Activated CD4-positive, alpha-beta T cell treated with anti-CD3 and anti-CD28 coated beads for 36 hours (primary cell): ENCODE measurements at regions of chr20 and their contacts with region 1.

Region 1: DNA sequence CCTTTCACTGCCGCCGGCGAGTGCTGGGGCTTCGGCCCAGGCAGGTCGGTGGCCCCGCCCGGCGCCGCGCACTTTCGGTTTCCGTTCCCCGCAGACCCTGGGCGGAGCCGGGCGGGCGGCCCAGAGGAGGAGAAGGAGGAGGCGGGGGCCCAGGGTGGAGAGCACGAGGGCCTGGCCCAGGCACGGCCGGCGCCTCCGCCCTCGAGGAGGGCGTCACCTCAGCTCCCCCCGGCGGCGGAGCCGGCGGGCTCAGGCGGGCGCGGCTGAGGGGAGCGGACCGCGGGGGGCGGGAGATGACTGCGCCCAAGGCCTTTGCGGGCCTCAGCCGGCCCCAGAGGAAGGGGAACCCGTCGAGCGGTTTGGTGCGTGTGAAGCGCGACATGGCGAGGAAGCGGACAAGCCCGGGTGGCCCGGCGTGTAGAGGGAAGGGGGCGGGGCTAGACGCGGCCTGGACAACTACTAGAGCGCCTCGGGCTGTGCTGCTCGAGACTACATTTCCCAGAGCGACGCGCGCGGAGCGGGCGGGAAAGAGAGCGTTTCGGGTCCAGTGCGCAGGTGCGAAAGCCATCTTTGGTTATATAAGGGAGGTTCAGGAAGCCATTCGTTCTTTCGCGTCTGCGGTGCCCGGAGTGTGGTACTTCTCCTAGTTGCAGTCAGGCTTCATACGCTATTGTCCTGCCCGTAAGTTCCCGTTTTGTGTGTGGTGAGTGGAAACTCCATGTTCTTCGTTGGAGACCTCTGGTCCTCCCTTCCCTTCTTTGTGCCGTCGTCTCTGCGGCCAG is at the start of gene ZNFX1:
- DNase-seq: peak; percentile 100
- ATAC-seq: peak; percentile 80
- H3K4me3 Mint-ChIP-seq: peak within 1 kb of the TSS; percentile 92
- H3K27ac Mint-ChIP-seq: peak within 1 kb of the TSS; percentile 98
- H3K4me1 Mint-ChIP-seq: peaks cover 52% of the 10 kb centered on the region
- H3K27me3 Mint-ChIP-seq: no peaks in the 10 kb centered on the region
- total RNA-seq, gene ZNFX1: 36.4 to 43.8 TPM

Region 2: DNA sequence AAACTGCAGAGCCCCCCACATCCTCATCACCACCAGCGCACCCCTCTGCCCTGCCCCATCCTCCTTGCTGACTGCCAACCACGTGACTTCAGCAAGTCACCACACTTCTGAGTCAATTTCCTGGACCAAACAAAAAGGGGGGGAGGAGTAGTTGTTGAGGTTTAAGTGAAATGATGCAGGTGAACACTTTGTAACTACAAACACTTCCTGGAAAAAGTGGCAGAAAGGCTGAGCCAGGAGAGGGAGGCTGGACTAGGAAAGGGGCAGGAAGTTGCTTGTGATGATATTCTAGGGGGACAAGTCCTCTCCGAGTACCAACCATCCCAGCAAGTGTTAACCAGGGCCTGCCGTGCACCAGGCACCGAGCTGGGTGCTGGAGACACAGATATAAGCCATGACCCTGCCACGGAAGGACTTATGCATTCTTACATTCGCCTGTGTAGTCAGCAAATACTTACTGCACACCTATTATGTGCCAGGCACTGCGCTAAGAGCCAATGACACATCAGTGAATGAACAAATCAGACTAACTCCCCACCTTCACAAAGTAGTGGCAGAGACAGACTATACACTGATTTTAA is 517.7 kb before region 1 on chr20:
- CTCF ChIA-PET with region 1: no interaction called
- POLR2A ChIA-PET with region 1: no interaction called
- intact Hi-C with region 1: loop called in 1 of 2 experiments (anchors 5 kb)
- DNase-seq: peak; percentile 78
- ATAC-seq: peak; percentile 87
- H3K4me3 Mint-ChIP-seq: peak overlapping the region; percentile 34
- H3K27ac Mint-ChIP-seq: peak overlapping the region; percentile 96
- H3K4me1 Mint-ChIP-seq: peaks cover 67% of the 10 kb centered on the region
- H3K27me3 Mint-ChIP-seq: no peaks in the 10 kb centered on the region

Region 3: DNA sequence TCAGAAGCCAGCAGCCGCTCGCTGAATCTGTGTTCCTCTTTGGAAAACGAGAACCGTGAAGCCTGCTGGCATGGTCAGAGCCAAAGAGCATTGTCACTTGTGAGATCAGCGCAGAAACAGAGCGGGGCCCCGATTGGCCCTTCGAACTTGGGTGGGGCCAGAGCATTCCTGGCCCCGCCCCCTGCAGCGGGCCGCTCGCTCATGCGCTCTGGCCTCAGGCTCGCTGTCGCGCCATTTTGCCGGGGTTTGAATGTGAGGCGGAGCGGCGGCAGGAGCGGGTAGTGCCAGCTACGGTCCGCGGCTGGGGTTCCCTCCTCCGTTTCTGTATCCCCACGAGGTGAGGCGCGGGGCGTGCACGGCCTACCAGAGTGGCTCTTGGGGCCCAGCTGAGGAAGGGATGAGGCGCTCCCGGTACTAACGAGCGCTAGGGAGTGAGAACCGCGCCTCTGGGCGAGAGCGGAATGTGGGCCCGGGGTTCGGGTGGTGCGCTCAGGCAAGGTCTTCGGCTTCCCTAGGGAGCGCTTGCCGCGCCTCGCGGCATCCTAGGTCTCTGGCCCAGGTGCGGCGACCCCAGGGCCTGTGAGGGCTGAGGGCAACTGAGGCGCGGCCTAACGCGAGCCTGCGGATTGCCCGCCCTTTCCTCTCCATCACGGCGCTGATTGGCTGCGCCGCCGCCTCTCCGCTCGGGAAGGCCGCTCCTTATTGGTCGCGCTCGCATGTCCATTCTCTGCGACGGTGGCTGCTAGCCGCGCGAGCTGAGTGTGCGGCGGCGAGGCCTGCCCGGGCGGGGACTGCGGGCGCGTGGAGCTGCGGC is 231.9 kb before region 1 on chr20 and contains the start of gene CSE1L:
- CTCF ChIA-PET with region 1: no interaction called
- POLR2A ChIA-PET with region 1: interaction called, 7 read pairs
- intact Hi-C with region 1: loop called in 1 of 2 experiments (anchors 1 kb)
- DNase-seq: peak; percentile 97
- ATAC-seq: peak; percentile 92
- H3K4me3 Mint-ChIP-seq: peak within 1 kb of the TSS; percentile 97
- H3K27ac Mint-ChIP-seq: peak within 1 kb of the TSS; percentile 99
- H3K4me1 Mint-ChIP-seq: peaks cover 30% of the 10 kb centered on the region
- H3K27me3 Mint-ChIP-seq: no peaks in the 10 kb centered on the region
- total RNA-seq, gene CSE1L: 119 to 126 TPM

Region 4: GRCh38 chr20:49186535-49187329 is 91.5 kb before region 1 on chr20:
- CTCF ChIA-PET with region 1: no interaction called
- POLR2A ChIA-PET with region 1: no interaction called
- intact Hi-C with region 1: loop called (anchors 1 to 2 kb)
- DNase-seq: peak; percentile 85
- ATAC-seq: peak; percentile 49
- H3K4me3 Mint-ChIP-seq: peak overlapping the region; percentile 96
- H3K27ac Mint-ChIP-seq: peak overlapping the region; percentile 89
- H3K4me1 Mint-ChIP-seq: peaks cover 51% of the 10 kb centered on the region
- H3K27me3 Mint-ChIP-seq: no peaks in the 10 kb centered on the region

Region 5: DNA sequence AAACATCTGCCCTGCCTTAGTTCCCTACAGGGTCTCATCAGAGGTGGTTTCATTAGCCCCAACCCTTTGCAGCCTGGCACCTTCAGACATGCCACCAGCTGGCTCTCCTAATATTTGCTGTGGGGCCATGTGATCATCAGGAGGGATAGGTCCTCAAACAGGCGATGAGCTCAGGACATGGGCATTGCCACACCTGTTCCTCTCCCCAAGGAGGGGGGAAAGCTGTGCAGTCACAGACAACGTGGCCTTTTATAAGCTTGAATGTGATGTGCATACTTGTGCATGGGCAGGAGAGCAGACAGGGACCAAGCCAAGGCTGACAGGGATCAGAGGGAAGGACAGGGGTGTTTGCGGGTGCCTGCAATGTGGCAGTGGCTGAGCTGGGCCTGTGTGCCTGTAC is 78.4 kb after region 1 on chr20:
- CTCF ChIA-PET with region 1: no interaction called
- POLR2A ChIA-PET with region 1: no interaction called
- intact Hi-C with region 1: no loop called
- DNase-seq: no peak
- ATAC-seq: no peak
- H3K4me3 Mint-ChIP-seq: no peak overlapping the region
- H3K27ac Mint-ChIP-seq: no peak overlapping the region
- H3K4me1 Mint-ChIP-seq: no peaks in the 10 kb centered on the region
- H3K27me3 Mint-ChIP-seq: peaks cover 8% of the 10 kb centered on the region

Region 6: GRCh38 chr20:49812463-49813304 is 534.5 kb after region 1 on chr20 and contains the start of gene SLC9A8:
- CTCF ChIA-PET with region 1: no interaction called
- POLR2A ChIA-PET with region 1: no interaction called
- intact Hi-C with region 1: loop called in 1 of 2 experiments (anchors 2 kb)
- DNase-seq: peak; percentile 89
- ATAC-seq: peak; percentile 92
- H3K4me3 Mint-ChIP-seq: peak within 1 kb of the TSS; percentile 94
- H3K27ac Mint-ChIP-seq: peak within 1 kb of the TSS; percentile 98
- H3K4me1 Mint-ChIP-seq: peaks cover 28% of the 10 kb centered on the region
- H3K27me3 Mint-ChIP-seq: no peaks in the 10 kb centered on the region
- total RNA-seq, gene SLC9A8: 12.6 to 16.7 TPM

Region 7: DNA sequence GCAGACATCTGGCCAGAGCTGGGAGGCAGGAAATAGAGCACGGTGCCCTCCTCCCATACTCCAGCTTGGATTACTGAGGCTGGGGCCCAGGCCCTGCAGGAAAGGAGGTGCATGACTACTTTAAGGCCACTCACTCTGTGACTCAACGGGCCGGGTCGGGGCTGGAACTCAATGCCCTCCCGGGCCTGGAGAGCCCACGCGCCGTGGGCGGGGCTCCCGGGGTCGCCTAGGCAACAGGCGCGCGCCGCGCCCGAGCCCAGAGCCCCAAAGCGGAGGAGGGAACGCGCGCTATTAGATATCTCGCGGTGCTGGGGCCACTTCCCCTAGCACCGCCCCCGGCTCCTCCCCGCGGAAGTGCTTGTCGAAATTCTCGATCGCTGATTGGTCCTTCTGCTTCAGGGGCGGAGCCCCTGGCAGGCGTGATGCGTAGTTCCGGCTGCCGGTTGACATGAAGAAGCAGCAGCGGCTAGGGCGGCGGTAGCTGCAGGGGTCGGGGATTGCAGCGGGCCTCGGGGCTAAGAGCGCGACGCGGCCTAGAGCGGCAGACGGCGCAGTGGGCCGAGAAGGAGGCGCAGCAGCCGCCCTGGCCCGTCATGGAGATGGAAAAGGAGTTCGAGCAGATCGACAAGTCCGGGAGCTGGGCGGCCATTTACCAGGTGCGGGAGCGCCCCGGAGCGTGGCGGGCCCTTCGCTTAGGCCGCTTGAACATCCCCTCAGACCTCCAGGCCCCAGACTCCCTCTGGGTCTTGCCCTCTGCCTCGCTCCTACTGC is 1231.9 kb after region 1 on chr20 and contains the start of gene PTPN1:
- CTCF ChIA-PET with region 1: no interaction called
- POLR2A ChIA-PET with region 1: no interaction called
- intact Hi-C with region 1: loop called in 1 of 2 experiments (anchors 5 kb)
- DNase-seq: peak; percentile 99
- ATAC-seq: peak; percentile 93
- H3K4me3 Mint-ChIP-seq: peak within 1 kb of the TSS; percentile 99
- H3K27ac Mint-ChIP-seq: peak within 1 kb of the TSS; percentile 92
- H3K4me1 Mint-ChIP-seq: peaks cover 47% of the 10 kb centered on the region
- H3K27me3 Mint-ChIP-seq: no peaks in the 10 kb centered on the region
- total RNA-seq, gene PTPN1: 79.0 to 92.8 TPM